ENCODE measurements at regions of chr1 and their contacts with region 1.

Region 1: DNA sequence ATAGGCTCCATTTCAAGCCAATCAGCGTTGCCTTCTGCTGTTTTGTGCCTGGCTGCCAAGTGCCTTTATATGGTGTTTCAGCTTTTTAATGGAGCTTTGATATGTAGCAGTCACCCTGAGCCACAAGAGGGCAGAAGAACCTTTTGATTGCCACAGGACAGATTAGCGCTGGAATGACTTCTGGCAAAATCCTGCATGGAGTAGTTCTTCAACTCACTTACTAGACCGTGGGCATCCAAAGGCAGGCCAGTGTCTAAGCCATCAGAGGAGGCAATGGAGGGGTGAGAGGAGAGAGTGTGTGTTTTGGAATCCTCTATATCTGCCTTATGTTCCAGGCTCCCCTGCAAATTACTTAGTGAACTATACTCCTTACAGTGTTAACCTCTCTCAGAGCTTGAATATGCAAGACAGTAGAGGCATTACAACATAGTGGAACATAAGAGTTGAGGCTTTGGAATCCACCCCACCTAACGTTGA is 56.2 kb downstream of the ST3GAL3 start:
- DNase-seq: peak; percentile 64
- ATAC-seq: peak; percentile 66
- H3K4me3 Mint-ChIP-seq: no peak overlapping the region
- H3K27ac Mint-ChIP-seq: no peak overlapping the region
- H3K4me1 Mint-ChIP-seq: peaks cover 16% of the 10 kb centered on the region
- H3K27me3 Mint-ChIP-seq: no peaks in the 10 kb centered on the region
- CTCF ChIP-seq: peak; percentile 72

Region 2: GRCh38 chr1:43274125-43274803 is 489.3 kb before region 1 on chr1:
- CTCF ChIA-PET with region 1: no interaction called
- POLR2A ChIA-PET with region 1: no interaction called
- DNase-seq: no peak
- ATAC-seq: no peak
- H3K4me3 Mint-ChIP-seq: no peak overlapping the region
- H3K27ac Mint-ChIP-seq: no peak overlapping the region
- H3K4me1 Mint-ChIP-seq: peaks cover 28% of the 10 kb centered on the region
- H3K27me3 Mint-ChIP-seq: no peaks in the 10 kb centered on the region
- CTCF ChIP-seq: no peak

Region 3: DNA sequence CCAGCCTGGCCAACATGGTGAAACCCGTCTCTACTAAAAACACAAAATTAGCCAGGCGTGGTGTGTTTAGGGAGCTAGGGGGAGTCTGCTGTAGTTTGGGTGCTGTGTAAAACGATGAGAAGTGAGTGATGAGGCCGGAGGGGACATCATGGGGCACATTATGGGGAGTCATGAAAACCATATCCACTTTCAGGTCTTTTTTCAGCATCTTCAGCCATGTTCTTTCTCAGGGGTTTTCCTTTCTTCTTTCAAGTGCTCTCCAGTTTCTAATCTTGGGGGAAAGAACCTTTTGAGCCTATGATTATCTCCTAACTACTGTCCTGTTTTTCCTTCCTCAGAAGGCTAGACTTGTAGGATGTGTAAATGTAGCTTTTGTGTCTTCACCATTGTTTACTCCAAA is 99.2 kb before region 1 on chr1:
- CTCF ChIA-PET with region 1: no interaction called
- POLR2A ChIA-PET with region 1: no interaction called
- DNase-seq: no peak
- ATAC-seq: no peak
- H3K4me3 Mint-ChIP-seq: no peak overlapping the region
- H3K27ac Mint-ChIP-seq: peak overlapping the region; percentile 50
- H3K4me1 Mint-ChIP-seq: peaks cover 18% of the 10 kb centered on the region
- H3K27me3 Mint-ChIP-seq: no peaks in the 10 kb centered on the region; the same call in 1 of the 2 replicates
- CTCF ChIP-seq: no peak

Region 4: DNA sequence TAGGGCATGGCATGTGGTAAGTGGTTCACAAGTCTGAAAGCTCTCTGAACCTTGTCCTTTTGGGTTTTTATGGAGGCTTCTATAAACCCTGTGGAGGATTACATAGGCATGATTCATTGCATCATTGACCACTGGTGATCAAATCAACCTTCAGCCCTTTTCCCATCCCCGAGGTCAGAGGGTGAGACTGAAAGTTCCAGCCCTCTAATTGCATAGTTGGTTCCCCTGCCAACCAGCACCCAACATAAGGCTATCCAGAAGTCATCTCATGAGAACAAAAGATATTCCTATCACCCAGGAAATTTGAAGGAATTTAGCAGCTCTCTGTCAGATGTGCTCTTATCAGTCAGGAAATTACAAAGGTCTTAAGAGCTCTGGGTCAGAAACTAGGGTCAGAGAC is 80.6 kb after region 1 on chr1:
- CTCF ChIA-PET with region 1: interaction called, 22 read pairs
- POLR2A ChIA-PET with region 1: no interaction called
- DNase-seq: no peak
- ATAC-seq: no peak
- H3K4me3 Mint-ChIP-seq: no peak overlapping the region
- H3K27ac Mint-ChIP-seq: no peak overlapping the region; the same call in 1 of the 2 replicates
- H3K4me1 Mint-ChIP-seq: peaks cover 44% of the 10 kb centered on the region
- H3K27me3 Mint-ChIP-seq: peaks cover 3% of the 10 kb centered on the region; the same call in 1 of the 2 replicates
- CTCF ChIP-seq: no peak

Region 5: DNA sequence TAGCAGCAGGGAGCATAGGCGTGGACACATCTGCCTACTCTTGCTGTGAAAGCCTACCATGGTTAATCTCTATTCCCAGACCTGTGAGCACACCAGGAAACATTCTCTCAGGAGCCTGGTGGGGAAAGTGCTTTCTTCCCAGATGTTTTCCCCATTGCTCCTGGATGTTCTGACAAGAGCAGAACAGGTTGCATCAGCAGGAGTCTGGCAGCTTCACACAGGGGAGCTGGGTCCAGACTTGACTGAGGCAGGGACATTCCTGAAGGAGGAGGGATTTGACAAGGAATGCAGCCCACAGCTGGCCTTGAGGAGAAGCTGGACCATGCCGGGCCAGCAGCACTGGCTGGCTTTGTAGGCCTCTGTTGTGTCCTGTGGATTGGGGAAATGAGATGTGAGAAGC is 149.1 kb after region 1 on chr1:
- CTCF ChIA-PET with region 1: interaction called, 30 read pairs
- POLR2A ChIA-PET with region 1: interaction called, 3 read pairs
- DNase-seq: peak; percentile 65
- ATAC-seq: peak; percentile 81
- H3K4me3 Mint-ChIP-seq: no peak overlapping the region
- H3K27ac Mint-ChIP-seq: no peak overlapping the region; the same call in none of the 2 replicates
- H3K4me1 Mint-ChIP-seq: peaks cover 32% of the 10 kb centered on the region
- H3K27me3 Mint-ChIP-seq: peaks cover 12% of the 10 kb centered on the region
- CTCF ChIP-seq: no peak

Region 6: GRCh38 chr1:43946236-43947060 is 182.9 kb after region 1 on chr1 and contains the start of gene IPO13:
- CTCF ChIA-PET with region 1: interaction called, 75 read pairs
- POLR2A ChIA-PET with region 1: interaction called, 3 read pairs
- DNase-seq: peak; percentile 98
- ATAC-seq: peak; percentile 91
- H3K4me3 Mint-ChIP-seq: peak within 1 kb of the TSS; percentile 83
- H3K27ac Mint-ChIP-seq: peak within 1 kb of the TSS; percentile 93
- H3K4me1 Mint-ChIP-seq: peaks cover 37% of the 10 kb centered on the region
- H3K27me3 Mint-ChIP-seq: no peaks in the 10 kb centered on the region
- CTCF ChIP-seq: peak; percentile 66
- total RNA-seq, gene IPO13: 17.8 to 24.2 TPM (median 19.1 TPM) in 3 replicates

Region 7: GRCh38 chr1:43974443-43975248 is 211.1 kb after region 1 on chr1 and contains the start of gene ATP6V0B:
- CTCF ChIA-PET with region 1: interaction called, 14 read pairs
- POLR2A ChIA-PET with region 1: interaction called, 3 read pairs
- DNase-seq: peak; percentile 96
- ATAC-seq: peak; percentile 70
- H3K4me3 Mint-ChIP-seq: peak within 1 kb of the TSS; percentile 89
- H3K27ac Mint-ChIP-seq: peak within 1 kb of the TSS; percentile 93
- H3K4me1 Mint-ChIP-seq: peaks cover 43% of the 10 kb centered on the region
- H3K27me3 Mint-ChIP-seq: no peaks in the 10 kb centered on the region
- CTCF ChIP-seq: no peak
- total RNA-seq, gene ATP6V0B: 108 to 115 TPM (median 110 TPM) in 3 replicates

Region 8: DNA sequence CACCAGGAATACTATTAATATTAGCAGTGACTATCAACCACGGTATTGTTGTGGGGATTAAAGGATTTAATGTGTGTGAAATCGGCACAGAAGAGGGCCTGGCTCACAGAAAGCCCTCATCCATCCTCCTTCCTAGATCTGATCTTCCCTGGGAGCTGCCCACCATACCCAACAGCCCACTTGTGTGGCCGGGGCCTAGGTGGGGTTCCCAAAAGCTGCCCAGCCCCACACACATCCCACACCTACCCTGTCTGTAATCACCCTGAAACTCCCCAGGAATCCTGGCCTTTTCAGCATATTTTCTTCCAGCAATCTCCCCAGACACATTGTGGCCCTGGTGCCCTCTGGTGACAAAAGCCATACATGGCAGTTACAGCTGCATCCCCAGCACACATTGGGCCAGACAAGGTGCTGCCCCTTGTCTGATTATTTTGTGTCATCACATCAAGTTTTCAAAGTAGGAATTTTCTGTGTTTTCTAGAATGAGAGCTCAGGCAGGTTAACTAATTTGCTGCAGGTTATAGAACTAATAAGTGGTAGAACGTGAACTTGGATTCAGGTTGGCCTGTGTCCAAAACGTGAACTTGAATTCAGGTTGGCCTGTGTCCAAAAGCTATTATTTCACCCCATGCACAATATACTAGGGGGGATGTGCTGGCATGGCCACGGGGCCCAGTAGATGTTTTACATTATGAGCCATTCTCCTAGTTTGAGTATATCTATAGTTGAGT is 273.0 kb after region 1 on chr1:
- CTCF ChIA-PET with region 1: interaction called, 15 read pairs
- POLR2A ChIA-PET with region 1: no interaction called
- DNase-seq: peak; percentile 80
- ATAC-seq: peak; percentile 64
- H3K4me3 Mint-ChIP-seq: no peak overlapping the region
- H3K27ac Mint-ChIP-seq: no peak overlapping the region
- H3K4me1 Mint-ChIP-seq: peaks cover 26% of the 10 kb centered on the region
- H3K27me3 Mint-ChIP-seq: peaks cover 4% of the 10 kb centered on the region
- CTCF ChIP-seq: peak; percentile 55; the same call in 1 of the 2 replicates